ENCODE measurements at regions of chr9 and their contacts with region 1.

Region 1: GRCh38 chr9:22722492-22722891 is 275.9 kb downstream of the DMRTA1 start:
- DNase-seq: no peak
- ATAC-seq: no peak
- H3K4me3 ChIP-seq: no peak overlapping the region
- H3K27ac ChIP-seq: no peak overlapping the region
- H3K4me1 ChIP-seq: no peaks in the 10 kb centered on the region
- H3K27me3 ChIP-seq: no peaks in the 10 kb centered on the region
- CTCF ChIP-seq: no peak

Region 2: DNA sequence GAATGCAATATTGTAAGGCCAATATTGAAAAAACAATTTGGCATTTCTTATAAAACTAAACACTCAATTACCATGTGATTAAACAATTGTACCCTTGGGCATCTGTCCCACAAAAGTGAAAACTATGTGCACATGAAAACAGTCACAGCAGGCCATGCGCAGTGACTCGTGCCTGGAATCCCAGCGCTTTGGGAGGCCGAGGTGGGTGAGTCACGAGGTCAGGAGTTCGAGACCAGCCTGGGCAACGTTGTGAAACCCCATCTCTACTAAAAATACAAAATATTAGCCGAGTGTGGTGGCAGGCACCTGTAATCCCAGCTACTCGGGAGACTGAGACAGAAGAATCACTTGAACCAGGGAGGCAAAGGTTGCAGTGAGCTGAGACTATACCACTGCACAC is 67.8 kb after region 1 on chr9:
- intact Hi-C with region 1: loop called in 1 of 2 experiments (anchors 10 kb)
- DNase-seq: peak in 1 of 4 donors; percentile 34
- ATAC-seq: no peak
- H3K4me3 ChIP-seq: no peak overlapping the region
- H3K27ac ChIP-seq: no peak overlapping the region
- H3K4me1 ChIP-seq: no peaks in the 10 kb centered on the region
- H3K27me3 ChIP-seq: no peaks in the 10 kb centered on the region
- CTCF ChIP-seq: no peak

Measured in left lung (tissue), 14 donors.